Dorsolateral prefrontal cortex (tissue), 120 donors: ENCODE measurements at regions of chr11 and their contacts with region 1.

Region 1: DNA sequence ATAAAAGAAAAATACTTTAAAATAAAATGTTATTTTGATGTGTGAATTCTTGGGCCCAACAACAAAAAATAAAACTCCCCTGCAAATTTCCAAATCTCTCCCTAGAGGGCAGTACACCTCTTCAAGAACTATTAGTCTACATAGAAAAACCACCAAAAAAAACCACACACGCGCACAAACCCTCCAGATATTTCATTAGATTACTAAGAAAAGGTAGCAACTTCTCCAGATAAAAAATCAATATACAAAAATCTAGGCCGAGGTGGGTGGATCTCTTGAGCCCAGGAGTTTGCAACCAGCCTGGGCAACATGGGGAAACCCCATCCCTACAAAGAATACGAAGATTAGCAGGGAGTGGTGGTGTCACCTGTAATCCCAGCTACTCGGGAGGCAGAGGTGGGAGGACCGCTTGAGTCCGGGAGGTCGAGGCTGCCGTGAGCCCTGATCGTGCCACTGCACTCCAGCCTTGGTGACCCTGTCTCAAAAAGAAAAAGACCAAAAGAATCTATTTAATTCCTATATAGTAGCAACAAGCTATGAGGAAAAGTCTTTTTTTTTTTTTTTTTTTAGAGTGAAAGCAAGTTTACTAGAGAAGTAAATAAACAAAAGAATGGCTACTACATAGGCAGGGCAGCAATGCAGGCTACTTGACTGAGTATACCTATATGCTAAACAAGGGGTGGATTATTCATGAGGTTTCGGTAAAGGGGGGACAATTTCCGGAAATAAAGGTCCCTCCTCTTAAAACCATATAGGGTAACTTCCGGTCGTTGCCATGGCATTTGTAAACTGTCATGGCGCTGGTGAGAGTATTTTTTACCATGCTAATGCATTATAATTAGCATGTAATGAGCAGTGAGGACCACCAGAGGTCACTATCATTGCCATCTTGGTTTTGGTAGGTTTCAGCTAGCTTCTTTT is 13.1 kb downstream of the B3GNT6 start:
- DNase-seq: peak in 7 of 10 donors; percentile 64 to 88 (median 71)
- H3K4me3 ChIP-seq: peak overlapping the region; percentile 10 to 66 (median 46)
- H3K27ac ChIP-seq: peak overlapping the region in 13 of 59 donors; percentile 4 to 75 (median 32)
- H3K27me3 ChIP-seq: peaks cover 0 to 10% (median 0%) of the 10 kb centered on the region in 45 donors
- CTCF ChIP-seq: peak; percentile 70 to 87 (median 82)

Region 2: DNA sequence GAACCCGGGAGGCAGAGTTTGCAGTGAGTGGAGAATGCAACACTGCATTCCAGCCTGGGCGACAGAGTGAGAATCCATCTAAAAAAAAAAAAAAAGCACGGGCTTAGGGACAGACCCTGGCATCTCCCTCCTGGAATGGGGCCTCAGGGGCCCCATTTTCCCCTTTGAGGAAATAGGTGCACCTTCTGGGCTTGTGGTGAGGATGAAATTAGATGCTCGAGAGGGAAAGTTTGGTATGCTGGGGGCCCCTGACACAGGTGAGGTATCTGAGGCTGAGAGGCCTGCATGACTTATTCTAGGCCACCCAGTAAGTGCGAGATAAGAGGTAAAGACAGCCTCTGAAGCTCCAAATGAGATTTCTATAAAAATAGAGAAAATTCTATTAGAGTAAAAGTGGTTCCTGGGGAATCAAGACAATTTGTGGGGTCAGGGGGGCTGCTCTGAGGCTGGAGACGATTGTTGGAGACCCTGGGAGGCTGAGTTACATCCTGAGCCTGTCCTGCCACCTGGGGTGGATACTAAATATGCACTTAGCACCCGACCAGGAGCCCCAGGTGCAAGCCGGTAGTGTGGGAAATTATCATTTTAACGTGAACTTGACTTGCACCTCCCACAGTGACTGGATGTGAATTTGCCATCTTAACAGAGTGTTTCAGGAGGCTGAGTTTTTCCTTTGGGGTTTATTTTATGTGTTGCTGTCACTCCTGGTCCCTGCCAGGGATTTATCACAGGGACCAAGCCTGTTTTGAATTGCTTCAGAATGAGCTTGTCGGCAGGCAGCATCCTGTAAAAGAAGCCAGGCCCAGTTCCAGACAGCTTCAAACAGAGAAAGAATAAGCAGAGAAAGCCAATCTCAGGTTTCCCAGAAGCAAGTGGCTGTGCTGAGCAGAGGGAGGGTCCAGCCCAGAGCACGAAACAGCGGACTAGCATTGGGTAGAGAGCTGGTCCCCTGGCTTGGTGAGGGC is 312.5 kb before region 1 on chr11:
- intact Hi-C with region 1: loop called (anchors 5 to 10 kb)
- DNase-seq: no peak
- H3K4me3 ChIP-seq: peak overlapping the region in 5 of 59 donors; percentile 7 to 22 (median 13)
- H3K27ac ChIP-seq: no peak overlapping the region
- H3K27me3 ChIP-seq: no peaks in the 10 kb centered on the region
- CTCF ChIP-seq: peak in 1 of 56 donors; percentile 7

Region 3: GRCh38 chr11:76807206-76807875 is 239.9 kb before region 1 on chr11:
- intact Hi-C with region 1: loop called (anchors 5 to 10 kb)
- DNase-seq: peak; percentile 79 to 89 (median 86)
- H3K4me3 ChIP-seq: peak overlapping the region in 30 of 59 donors; percentile 1 to 48 (median 26)
- H3K27ac ChIP-seq: peak overlapping the region in 5 of 59 donors; percentile 24 to 57 (median 29)
- H3K27me3 ChIP-seq: peaks cover 0 to 5% (median 0%) of the 10 kb centered on the region in 45 donors
- CTCF ChIP-seq: peak; percentile 69 to 96 (median 87)

Region 4: GRCh38 chr11:76919887-76920746 is 127.2 kb before region 1 on chr11:
- intact Hi-C with region 1: loop called (anchors 5 to 10 kb)
- DNase-seq: peak; percentile 43 to 76 (median 66)
- H3K4me3 ChIP-seq: peak overlapping the region in 9 of 59 donors; percentile 4 to 32 (median 13)
- H3K27ac ChIP-seq: peak overlapping the region in 23 of 59 donors; percentile 9 to 86 (median 43)
- H3K27me3 ChIP-seq: no peaks in the 10 kb centered on the region
- CTCF ChIP-seq: peak; percentile 77 to 98 (median 90)

Region 5: DNA sequence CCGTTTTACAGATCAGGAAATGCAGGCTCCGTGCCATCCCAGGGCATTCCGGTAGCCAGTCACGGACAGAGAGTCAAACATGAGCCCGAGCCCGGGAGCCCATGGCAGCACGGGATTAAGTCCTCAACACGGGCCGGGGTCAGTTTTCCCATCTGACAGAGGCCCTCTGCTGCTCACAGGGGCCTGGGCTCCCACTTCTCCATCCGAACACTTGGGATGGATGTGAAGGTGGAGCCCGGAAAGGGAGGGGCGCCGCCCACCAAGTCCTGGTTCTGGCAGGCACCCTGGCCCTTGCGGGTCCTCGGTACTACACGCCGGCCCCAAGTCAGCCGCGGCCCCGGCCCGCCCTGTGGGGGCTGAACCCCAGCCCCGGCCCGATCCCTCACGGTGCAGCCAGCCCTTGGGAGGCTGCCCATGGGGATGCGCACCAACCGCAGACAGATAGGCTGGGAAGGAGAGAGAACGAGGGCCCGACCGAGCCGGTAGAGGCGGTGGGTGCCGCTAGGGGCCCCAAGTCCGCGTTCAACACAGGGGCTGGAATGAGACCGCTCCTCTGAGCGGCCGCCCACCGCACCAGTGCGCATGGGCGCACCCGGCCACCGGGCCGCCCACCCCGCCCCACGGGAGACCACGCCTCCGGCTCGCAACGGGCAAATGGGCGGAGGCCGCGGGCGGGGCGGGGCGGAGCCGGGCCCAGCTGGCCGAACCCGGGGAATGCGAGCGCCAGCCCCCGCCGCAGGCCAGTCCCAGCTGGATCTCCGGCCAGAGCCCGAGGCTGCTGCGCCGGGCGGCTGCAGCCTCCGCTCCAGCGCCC is 19.2 kb after region 1 on chr11 and contains the start of gene CAPN5:
- intact Hi-C with region 1: loop called in 1 of 2 experiments (anchors 1 kb)
- DNase-seq: peak; percentile 81 to 98 (median 92)
- H3K4me3 ChIP-seq: peak within 1 kb of the TSS; percentile 63 to 95 (median 80)
- H3K27ac ChIP-seq: peak within 1 kb of the TSS in 58 of 59 donors; percentile 53 to 95 (median 86)
- H3K27me3 ChIP-seq: no peaks in the 10 kb centered on the region
- CTCF ChIP-seq: peak in 51 of 56 donors; percentile 12 to 69 (median 47)
- total RNA-seq, gene CAPN5: 12.5 to 36.7 (median 23.3) TPM

Region 6: GRCh38 chr11:77091146-77091940 is 44.1 kb after region 1 on chr11:
- intact Hi-C with region 1: loop called (anchors 1 kb)
- DNase-seq: peak; percentile 78 to 89 (median 84)
- H3K4me3 ChIP-seq: no peak overlapping the region
- H3K27ac ChIP-seq: peak overlapping the region in 11 of 59 donors; percentile 2 to 63 (median 22)
- H3K27me3 ChIP-seq: no peaks in the 10 kb centered on the region
- CTCF ChIP-seq: peak; percentile 53 to 97 (median 93)

Region 7: GRCh38 chr11:77113382-77114088 is 66.3 kb after region 1 on chr11:
- intact Hi-C with region 1: no loop called
- DNase-seq: no peak
- H3K4me3 ChIP-seq: no peak overlapping the region
- H3K27ac ChIP-seq: no peak overlapping the region
- H3K27me3 ChIP-seq: no peaks in the 10 kb centered on the region
- CTCF ChIP-seq: peak; percentile 17 to 68 (median 52)

Region 8: GRCh38 chr11:77187776-77188632 is 140.7 kb after region 1 on chr11:
- intact Hi-C with region 1: loop called (anchors 2 to 5 kb)
- DNase-seq: peak; percentile 76 to 90 (median 84)
- H3K4me3 ChIP-seq: no peak overlapping the region
- H3K27ac ChIP-seq: no peak overlapping the region
- H3K27me3 ChIP-seq: no peaks in the 10 kb centered on the region
- CTCF ChIP-seq: peak; percentile 74 to 96 (median 92)